GM18951 (cell line): ENCODE measurements at regions of chr6 and their contacts with region 1.

Region 1: DNA sequence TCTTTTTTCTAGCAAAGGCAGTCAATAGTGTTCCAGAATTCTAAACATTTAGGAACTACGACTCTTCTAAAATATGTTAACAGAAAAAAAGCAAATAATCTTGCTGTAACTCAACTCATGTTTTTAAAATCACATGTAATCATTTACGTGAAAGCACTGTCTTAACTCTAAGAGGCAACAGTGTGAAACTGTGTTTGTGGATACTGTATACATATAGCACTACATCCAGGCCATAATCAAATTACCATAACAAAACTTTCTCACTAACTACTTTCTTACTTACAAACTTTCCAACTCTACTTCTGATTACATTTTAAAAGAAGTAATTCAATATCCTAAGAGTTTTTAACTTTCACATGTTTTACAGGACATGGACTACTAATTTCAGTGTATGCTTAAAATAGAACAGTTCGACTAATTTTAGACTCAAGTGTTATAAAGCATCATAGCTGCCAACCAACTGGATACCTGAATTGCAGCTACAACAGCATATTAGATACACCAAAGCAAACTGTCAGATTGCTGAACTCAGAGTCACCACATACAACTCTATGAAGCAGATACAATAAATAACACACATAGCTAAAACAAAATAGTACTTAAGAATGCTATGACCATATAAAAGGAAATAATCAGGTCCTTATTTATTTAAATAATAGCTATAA is 121.6 kb upstream of the BEND6 start:
- POLR2A ChIP-seq: no peak

Region 2: GRCh38 chr6:56713254-56713672 is 120.0 kb before region 1 on chr6:
- in situ Hi-C with region 1: loop called (anchors 10 kb)
- POLR2A ChIP-seq: no peak

Region 3: GRCh38 chr6:57064809-57065208 is 231.6 kb after region 1 on chr6:
- in situ Hi-C with region 1: no loop called
- POLR2A ChIP-seq: no peak